MCF 10A (cell line): ENCODE measurements at regions of chr13 and their contacts with region 1.

Region 1: DNA sequence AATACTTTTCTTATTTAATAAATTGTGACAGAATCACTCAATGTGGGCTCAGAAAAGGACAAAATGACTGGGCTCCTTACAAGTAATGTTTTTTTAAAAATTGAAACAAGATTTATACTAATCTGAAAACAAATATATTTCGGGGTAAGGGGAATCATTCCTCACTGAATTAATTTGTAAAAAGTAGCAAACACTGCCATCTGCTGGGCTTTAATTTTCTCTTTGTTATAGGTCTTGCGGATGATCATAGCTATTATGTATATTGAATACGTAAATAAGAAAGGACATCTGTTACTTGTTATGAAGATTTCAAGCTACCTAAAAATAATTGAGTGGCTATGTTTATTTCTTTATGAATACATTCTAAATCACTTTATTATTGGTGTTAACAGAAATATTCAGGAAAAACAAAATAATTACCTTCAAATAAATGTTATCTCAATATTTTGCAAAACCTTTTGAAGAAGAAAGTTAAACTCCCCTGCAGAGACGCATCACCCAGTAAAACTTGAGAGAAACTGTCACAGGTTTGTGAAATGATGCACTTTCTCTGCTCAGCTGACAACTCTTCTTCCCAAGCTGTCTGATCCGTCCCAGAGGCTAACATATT is 17.8 kb upstream of the ENOX1 start:
- DNase-seq: peak; percentile 76
- H3K4me3 Mint-ChIP-seq: peak overlapping the region; percentile 67
- H3K27ac Mint-ChIP-seq: peak overlapping the region; percentile 84
- H3K4me1 Mint-ChIP-seq: peaks cover 14% of the 10 kb centered on the region
- H3K27me3 Mint-ChIP-seq: no peaks in the 10 kb centered on the region
- CTCF ChIP-seq: peak; percentile 57

Region 2: DNA sequence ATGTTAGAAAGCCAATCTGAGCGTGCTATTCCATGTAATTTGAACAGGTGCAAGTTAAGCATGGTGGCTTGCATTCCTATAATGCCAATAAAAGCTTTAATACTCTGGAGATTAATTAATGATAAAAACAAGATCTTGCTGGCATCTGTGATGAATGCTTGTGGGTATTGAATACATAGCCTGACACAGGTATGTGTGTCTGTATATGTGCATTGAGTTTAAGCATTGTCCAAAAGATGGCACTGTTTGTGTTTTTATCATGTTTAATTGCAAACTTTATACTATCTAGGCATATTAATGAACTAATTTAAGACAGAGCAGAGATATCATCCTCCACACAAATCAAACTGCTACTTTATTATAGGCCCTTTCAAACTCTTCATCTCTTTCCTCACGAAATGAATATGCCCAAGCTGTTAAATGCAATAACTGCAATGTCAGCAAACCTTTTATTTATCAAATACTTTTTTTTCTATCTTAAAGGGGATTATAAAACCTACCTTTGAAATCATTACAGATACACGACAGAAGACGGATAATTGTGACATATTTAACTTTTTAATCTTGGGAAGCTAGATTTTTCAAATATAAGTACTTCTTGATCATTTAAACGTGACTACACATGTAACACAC is 1144.1 kb before region 1 on chr13:
- CTCF ChIA-PET with region 1: interaction called, 6 read pairs
- POLR2A ChIA-PET with region 1: interaction called, 4 read pairs
- intact Hi-C with region 1: loop called (anchors 2 kb)
- DNase-seq: peak; percentile 31
- H3K4me3 Mint-ChIP-seq: no peak overlapping the region
- H3K27ac Mint-ChIP-seq: no peak overlapping the region
- H3K4me1 Mint-ChIP-seq: no peaks in the 10 kb centered on the region
- H3K27me3 Mint-ChIP-seq: peaks cover 39% of the 10 kb centered on the region
- CTCF ChIP-seq: peak; percentile 35

Region 3: DNA sequence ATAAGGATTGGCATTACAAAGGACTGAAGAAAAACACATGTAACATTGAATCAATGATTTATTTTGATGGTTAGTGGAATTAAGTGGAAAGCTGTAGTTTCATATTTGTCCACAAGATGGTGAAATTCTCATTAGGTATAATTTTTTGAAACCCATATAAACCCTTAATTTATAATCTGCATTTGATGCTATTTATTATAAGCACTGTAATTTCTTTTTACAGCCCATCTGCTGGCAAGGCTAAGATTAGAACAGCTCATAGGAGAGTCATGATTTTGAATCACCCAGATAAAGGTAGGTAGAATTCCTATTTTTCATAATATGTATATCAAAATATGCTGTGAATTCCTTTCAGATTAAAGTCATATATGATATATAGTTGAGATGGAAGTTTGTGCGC is 719.0 kb before region 1 on chr13:
- CTCF ChIA-PET with region 1: interaction called, 30 read pairs
- POLR2A ChIA-PET with region 1: interaction called, 6 read pairs
- intact Hi-C with region 1: loop called (anchors 1 kb)
- DNase-seq: peak; percentile 46
- H3K4me3 Mint-ChIP-seq: no peak overlapping the region
- H3K27ac Mint-ChIP-seq: no peak overlapping the region
- H3K4me1 Mint-ChIP-seq: peaks cover 16% of the 10 kb centered on the region
- H3K27me3 Mint-ChIP-seq: no peaks in the 10 kb centered on the region
- CTCF ChIP-seq: peak; percentile 32

Region 4: GRCh38 chr13:43303033-43303729 is 501.4 kb before region 1 on chr13:
- CTCF ChIA-PET with region 1: interaction called, 3 read pairs
- POLR2A ChIA-PET with region 1: no interaction called
- intact Hi-C with region 1: loop called (anchors 5 kb)
- DNase-seq: peak; percentile 35
- H3K4me3 Mint-ChIP-seq: no peak overlapping the region
- H3K27ac Mint-ChIP-seq: no peak overlapping the region
- H3K4me1 Mint-ChIP-seq: peaks cover 42% of the 10 kb centered on the region
- H3K27me3 Mint-ChIP-seq: no peaks in the 10 kb centered on the region
- CTCF ChIP-seq: peak; percentile 27

Region 5: DNA sequence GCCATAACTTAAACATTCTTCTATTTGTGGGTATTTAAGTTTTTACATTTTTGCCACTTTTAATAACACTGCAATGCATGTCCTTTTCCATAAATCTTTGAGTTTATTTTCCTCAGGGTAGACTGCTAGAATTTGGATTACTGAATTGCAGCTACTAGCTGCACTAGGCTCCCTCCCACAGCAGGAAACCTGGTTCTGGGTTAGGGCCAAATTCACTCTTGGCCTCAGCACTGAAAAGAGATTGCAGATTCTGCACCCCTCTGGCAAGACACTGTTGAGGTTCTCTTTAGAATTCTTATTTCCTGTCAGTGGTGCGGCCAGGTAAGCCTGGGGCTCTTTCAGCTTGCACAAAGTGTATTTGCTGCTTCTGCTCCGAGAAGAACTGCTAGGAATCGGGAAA is 173.5 kb before region 1 on chr13:
- CTCF ChIA-PET with region 1: no interaction called
- POLR2A ChIA-PET with region 1: no interaction called
- intact Hi-C with region 1: no loop called
- DNase-seq: peak; percentile 23
- H3K4me3 Mint-ChIP-seq: no peak overlapping the region
- H3K27ac Mint-ChIP-seq: no peak overlapping the region
- H3K4me1 Mint-ChIP-seq: no peaks in the 10 kb centered on the region
- H3K27me3 Mint-ChIP-seq: no peaks in the 10 kb centered on the region
- CTCF ChIP-seq: no peak

Region 6: DNA sequence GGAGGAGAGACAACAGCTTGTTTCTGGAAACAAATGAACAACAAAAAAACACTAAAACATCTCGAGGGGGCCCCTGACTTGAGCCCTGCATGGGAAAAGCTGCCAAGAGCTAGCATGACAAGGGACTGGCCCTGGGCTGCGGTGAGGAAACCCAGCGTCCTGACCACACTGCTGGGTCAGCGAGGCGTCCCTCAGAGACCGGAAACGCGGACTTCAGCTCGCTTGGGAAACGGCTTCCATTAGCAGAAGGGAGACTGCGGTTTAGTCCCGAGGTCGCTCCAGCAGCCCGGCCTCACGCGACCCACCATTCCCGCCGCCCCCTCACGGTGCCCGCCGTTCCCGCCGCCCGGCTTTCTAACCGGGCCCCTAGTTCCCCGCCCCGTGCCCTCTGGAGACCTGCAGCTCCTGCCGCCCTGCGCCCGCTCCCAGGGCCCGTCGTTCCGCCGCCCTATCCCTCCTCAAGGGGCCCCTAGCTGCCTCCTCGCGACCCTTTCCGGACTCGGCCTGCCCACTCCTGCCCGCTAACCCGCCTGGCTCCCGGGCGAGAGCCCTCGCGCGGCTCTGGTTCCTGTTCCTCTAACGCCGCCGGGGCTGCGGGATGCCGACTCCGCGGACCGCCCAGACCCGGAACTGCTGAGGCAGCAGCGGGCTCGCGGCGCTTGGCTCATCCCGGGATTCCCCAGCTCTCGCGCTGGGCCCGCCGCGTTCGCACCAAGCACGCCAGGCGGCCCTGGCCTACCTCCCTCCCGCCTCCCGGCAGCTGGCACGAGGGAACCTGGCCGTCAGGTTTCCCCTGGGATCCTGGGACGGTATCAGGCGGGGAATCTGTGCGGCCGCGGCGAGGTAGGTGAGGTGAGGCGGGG is 74.6 kb after region 1 on chr13 and contains the start of gene CCDC122:
- CTCF ChIA-PET with region 1: interaction called, 5 read pairs
- POLR2A ChIA-PET with region 1: interaction called, 14 read pairs
- intact Hi-C with region 1: loop called (anchors 1 kb)
- DNase-seq: peak; percentile 83
- H3K4me3 Mint-ChIP-seq: peak within 1 kb of the TSS; percentile 93
- H3K27ac Mint-ChIP-seq: peak within 1 kb of the TSS; percentile 98
- H3K4me1 Mint-ChIP-seq: peaks cover 23% of the 10 kb centered on the region
- H3K27me3 Mint-ChIP-seq: no peaks in the 10 kb centered on the region
- CTCF ChIP-seq: no peak
- total RNA-seq, gene CCDC122: 15.7 and 16.3 TPM in 2 replicates